GM10248 (cell line): ENCODE measurements at regions of chr3 and their contacts with region 1.

Region 1: GRCh38 chr3:45210308-45211041 is 15.6 kb downstream of the TMEM158 start:
- DNase-seq: peak; percentile 74
- CTCF ChIP-seq: peak; percentile 62

Region 2: GRCh38 chr3:45037734-45038455 is 172.6 kb before region 1 on chr3:
- CTCF ChIA-PET with region 1: interaction called, 149 read pairs
- POLR2A ChIA-PET with region 1: no interaction called
- DNase-seq: peak; percentile 89
- CTCF ChIP-seq: peak; percentile 95

Region 3: DNA sequence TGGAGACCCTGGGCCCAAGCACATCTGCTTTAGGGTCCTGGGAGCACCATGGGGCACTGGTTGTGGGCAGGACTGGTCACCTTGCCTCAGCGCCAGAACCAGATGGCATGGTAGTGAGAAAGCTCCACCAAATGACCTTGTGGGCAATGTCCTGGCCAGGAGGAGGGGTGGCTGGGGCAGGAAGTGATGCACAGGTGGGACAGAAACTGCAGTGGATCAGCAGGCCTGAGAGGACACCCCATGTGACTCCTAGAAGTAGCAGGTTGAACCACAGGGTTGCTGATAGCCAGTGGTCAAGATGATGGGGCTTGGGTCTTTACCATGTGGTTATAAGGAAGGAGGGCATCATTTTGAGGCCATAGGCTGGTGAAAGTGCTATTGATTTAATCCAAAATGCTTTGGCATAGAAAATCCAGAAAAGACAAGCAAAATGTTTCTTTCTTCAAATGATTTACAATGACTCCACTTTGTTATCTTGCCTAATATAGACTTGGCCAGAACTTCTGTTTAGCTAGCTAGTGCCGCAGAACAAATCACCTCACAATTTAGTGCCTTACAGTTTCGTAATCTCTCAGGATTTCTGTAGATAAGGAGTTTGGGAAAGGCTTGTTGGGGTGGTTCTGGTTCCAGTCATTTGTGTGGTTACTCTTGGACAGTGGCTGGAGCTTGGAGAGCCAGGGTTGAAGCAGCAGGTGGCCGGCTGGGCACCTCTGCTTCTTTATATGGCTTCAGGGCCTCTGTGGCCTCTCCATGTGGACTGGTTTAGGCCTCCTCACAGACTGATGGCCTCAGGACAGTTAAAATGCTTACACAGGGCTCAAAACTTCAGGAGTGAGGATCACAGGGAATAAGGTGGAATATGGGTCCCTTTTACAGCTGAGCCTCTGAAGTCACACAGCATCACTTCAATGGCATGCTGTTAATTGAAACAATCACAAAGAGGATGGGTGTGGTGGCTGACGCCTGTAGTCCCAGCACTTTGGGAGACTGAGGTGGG is 11.9 kb before region 1 on chr3:
- CTCF ChIA-PET with region 1: interaction called, 13 read pairs
- POLR2A ChIA-PET with region 1: no interaction called
- DNase-seq: no peak
- CTCF ChIP-seq: no peak